ENCODE measurements at regions of chr20 and their contacts with region 1.

Region 1: DNA sequence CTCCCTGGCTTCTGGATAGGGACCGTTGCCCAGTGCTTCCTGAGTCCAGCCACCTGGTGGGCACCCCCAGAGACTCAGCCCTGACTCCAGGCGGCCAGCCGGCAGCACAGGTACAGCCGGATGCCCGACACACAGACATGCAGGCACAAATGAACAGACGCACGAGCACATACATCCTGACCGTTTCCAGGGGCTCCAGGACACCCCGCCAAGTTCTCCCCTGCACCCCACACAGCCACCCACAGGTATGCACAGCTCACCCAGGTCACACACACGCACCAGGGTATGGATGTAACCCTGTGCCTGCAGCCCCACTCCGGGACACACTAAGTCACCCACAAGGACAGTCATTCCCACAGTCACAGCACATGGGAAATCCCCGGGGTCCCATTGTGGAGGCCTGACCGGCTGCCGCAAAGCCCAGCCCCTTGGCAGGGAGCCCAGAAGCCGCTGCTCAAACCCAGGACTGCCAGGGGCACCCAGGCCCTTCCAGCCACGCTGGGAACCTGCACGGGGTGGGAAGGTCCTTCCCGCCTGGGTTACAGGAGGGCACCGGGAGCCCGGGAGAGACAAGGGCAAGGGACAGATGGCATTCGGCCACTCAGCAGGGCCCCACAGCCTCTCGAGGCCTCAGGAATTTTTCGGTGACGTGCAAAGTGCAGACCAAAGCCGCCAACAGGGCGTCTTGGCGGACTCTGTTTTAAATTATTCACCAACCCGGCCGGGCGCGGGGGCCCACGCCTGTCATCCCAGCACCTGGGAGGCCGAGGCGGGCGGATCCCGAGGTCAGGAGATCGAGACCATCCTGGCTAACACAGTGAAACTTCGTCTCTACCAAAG is 10.6 kb upstream of the KCNQ2 start:
- DNase-seq: peak; percentile 93
- H3K4me3 ChIP-seq: no peak overlapping the region
- H3K27ac ChIP-seq: peak overlapping the region in 1 of 2 experiments; percentile 54; a peak in 2 of 4 replicates
- H3K4me1 ChIP-seq: peaks cover 0 to 56% of the 10 kb centered on the region in 2 experiments; a peak in 1 of 4 replicates
- H3K27me3 ChIP-seq: no peaks in the 10 kb centered on the region
- CTCF ChIP-seq: no peak
- EP300 ChIP-seq: no peak
- RAD21 ChIP-seq: peak; percentile 30; the same call in 1 of the 2 replicates

Region 2: GRCh38 chr20:63402184-63402859 is 80.8 kb before region 1 on chr20:
- CTCF ChIA-PET with region 1: interaction called, 10 read pairs
- POLR2A ChIA-PET with region 1: no interaction called
- DNase-seq: no peak
- H3K4me3 ChIP-seq: no peak overlapping the region
- H3K27ac ChIP-seq: no peak overlapping the region
- H3K4me1 ChIP-seq: peaks cover 0 to 38% of the 10 kb centered on the region in 2 experiments; a peak in 1 of 4 replicates
- H3K27me3 ChIP-seq: peaks cover 38% of the 10 kb centered on the region
- CTCF ChIP-seq: no peak
- EP300 ChIP-seq: no peak
- RAD21 ChIP-seq: no peak

Region 3: GRCh38 chr20:63442100-63442493 is 41.0 kb before region 1 on chr20:
- CTCF ChIA-PET with region 1: interaction called, 32 read pairs
- POLR2A ChIA-PET with region 1: no interaction called
- DNase-seq: peak; percentile 86
- H3K4me3 ChIP-seq: no peak overlapping the region
- H3K27ac ChIP-seq: peak overlapping the region in 1 of 2 experiments; percentile 62; a peak in 1 of 4 replicates
- H3K4me1 ChIP-seq: peaks cover 0 to 32% of the 10 kb centered on the region in 2 experiments; a peak in 1 of 4 replicates
- H3K27me3 ChIP-seq: no peaks in the 10 kb centered on the region
- CTCF ChIP-seq: peak; percentile 32
- EP300 ChIP-seq: no peak
- RAD21 ChIP-seq: peak; percentile 71

Region 4: GRCh38 chr20:63791497-63792156 is 308.6 kb after region 1 on chr20:
- CTCF ChIA-PET with region 1: no interaction called
- POLR2A ChIA-PET with region 1: no interaction called
- DNase-seq: no peak
- H3K4me3 ChIP-seq: no peak overlapping the region
- H3K27ac ChIP-seq: no peak overlapping the region
- H3K4me1 ChIP-seq: no peaks in the 10 kb centered on the region
- H3K27me3 ChIP-seq: no peaks in the 10 kb centered on the region
- CTCF ChIP-seq: no peak
- EP300 ChIP-seq: no peak
- RAD21 ChIP-seq: no peak

Measured in SK-N-SH (cell line).